Activated B cell treated with CpG ODN at 0.5 μM for 24 hours (primary cell): ENCODE measurements at regions of chr1 and their contacts with region 1.

Region 1: GRCh38 chr1:54052934-54053744 is at the starts of genes TCEANC2 and TMEM59:
- DNase-seq: peak; percentile 92
- ATAC-seq: peak; percentile 92
- H3K4me3 Mint-ChIP-seq: no peak within 1 kb of the TSS
- H3K27ac Mint-ChIP-seq: no peak within 1 kb of the TSS
- H3K4me1 Mint-ChIP-seq: peaks cover 38% of the 10 kb centered on the region
- H3K27me3 Mint-ChIP-seq: no peaks in the 10 kb centered on the region
- CTCF ChIP-seq: no peak
- total RNA-seq, gene TCEANC2: 7.3 and 8.1 TPM in 2 replicates
- total RNA-seq, gene TMEM59: 103 and 123 TPM in 2 replicates

Region 2: GRCh38 chr1:53837924-53838652 is 215.1 kb before region 1 on chr1 and contains the start of gene NDC1:
- CTCF ChIA-PET with region 1: no interaction called
- POLR2A ChIA-PET with region 1: no interaction called
- intact Hi-C with region 1: loop called (anchors 1 kb)
- DNase-seq: peak; percentile 86
- ATAC-seq: peak; percentile 89
- H3K4me3 Mint-ChIP-seq: peak within 1 kb of the TSS; percentile 94
- H3K27ac Mint-ChIP-seq: peak within 1 kb of the TSS; percentile 98
- H3K4me1 Mint-ChIP-seq: peaks cover 33% of the 10 kb centered on the region
- H3K27me3 Mint-ChIP-seq: no peaks in the 10 kb centered on the region
- CTCF ChIP-seq: no peak
- total RNA-seq, gene NDC1: 10.6 and 14.0 TPM in 2 replicates

Region 3: DNA sequence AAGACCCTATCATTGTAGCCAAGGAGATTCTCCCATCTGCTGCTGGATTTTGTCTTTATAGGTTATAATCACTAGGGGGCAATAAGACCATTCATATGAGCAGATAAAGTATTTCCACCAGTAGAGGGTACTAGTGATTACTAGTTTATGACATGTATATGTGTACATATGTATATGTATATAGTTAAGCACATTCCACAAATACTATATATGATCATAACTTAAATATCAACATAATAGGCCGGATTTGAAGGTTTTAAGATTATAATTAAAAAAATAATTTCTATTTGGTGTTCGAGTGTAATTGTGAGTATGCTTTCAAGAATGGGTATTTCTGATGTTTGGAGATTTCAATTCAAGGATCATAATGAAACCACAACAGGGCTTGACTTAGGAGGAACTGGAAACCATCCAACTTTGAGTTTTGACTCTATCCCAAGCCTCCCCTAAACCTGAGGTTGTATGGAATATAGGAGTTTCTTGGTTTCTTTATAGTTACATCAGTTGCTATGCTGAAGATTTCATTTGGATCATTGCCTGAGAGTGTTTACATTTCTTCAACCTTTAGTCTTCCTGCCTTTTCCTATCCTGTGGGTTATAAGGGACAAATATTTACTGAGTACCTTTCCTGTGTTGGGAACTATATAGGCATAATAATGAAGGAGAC is 17.2 kb after region 1 on chr1:
- CTCF ChIA-PET with region 1: no interaction called
- POLR2A ChIA-PET with region 1: interaction called, 9 read pairs
- intact Hi-C with region 1: loop called (anchors 1 kb)
- DNase-seq: no peak
- ATAC-seq: peak; percentile 95
- H3K4me3 Mint-ChIP-seq: no peak overlapping the region
- H3K27ac Mint-ChIP-seq: no peak overlapping the region
- H3K4me1 Mint-ChIP-seq: no peaks in the 10 kb centered on the region
- H3K27me3 Mint-ChIP-seq: no peaks in the 10 kb centered on the region
- CTCF ChIP-seq: peak; percentile 88

Region 4: DNA sequence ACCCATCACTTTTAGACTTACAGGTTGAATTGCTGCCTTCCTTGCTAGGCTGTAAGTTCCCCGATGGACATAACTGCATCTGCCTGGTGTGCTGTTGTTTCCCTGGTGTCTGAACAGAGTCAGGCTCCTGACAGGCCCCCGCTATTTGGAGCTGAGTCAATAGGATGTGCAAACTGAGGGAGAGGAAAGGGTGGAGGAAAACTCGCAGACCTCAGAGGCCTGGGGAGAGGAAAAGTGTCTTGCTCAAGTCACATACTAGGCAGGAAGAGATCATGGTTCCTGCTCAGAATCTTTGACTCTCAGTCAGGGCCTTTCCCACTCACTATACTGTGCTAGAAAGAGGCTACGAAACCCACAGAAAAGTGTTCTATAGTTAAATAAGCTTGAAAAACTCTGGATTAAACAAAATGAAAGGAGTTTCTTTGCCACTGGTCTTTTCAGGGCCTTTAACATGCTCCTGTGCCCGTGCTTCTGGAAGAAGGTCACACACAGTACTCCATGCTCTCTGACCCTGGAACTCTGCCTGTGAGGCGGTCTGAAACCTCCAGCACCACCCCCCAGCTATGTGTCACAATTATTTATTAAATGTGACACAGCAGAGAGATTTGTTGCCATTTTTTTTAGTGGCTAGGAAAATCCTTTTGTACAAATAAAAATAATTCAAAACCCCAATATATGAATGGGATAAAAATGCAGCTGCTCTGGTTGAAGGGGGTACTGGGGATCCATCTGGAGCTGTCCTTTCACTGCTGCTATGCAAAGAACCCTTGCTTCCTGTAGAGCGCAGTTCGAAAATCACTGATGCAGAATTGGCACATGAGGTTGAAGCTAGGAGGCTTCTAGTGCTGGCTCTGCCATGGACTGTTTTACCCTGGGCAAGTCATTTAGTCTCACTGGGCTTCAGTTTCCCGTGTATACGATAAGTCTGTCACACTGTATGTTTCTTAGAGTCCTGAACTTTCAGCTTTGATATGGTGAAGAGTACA is 119.8 kb after region 1 on chr1:
- CTCF ChIA-PET with region 1: no interaction called
- POLR2A ChIA-PET with region 1: no interaction called
- intact Hi-C with region 1: no loop called
- DNase-seq: no peak
- ATAC-seq: no peak
- H3K4me3 Mint-ChIP-seq: no peak overlapping the region
- H3K27ac Mint-ChIP-seq: no peak overlapping the region
- H3K4me1 Mint-ChIP-seq: no peaks in the 10 kb centered on the region
- H3K27me3 Mint-ChIP-seq: no peaks in the 10 kb centered on the region
- CTCF ChIP-seq: no peak

Region 5: GRCh38 chr1:54715493-54716298 is 662.6 kb after region 1 on chr1 and contains the start of gene TTC4:
- CTCF ChIA-PET with region 1: no interaction called
- POLR2A ChIA-PET with region 1: interaction called, 4 read pairs
- intact Hi-C with region 1: loop called (anchors 1 kb)
- DNase-seq: peak; percentile 88
- ATAC-seq: peak; percentile 98
- H3K4me3 Mint-ChIP-seq: peak within 1 kb of the TSS; percentile 94
- H3K27ac Mint-ChIP-seq: peak within 1 kb of the TSS; percentile 83
- H3K4me1 Mint-ChIP-seq: peaks cover 30% of the 10 kb centered on the region
- H3K27me3 Mint-ChIP-seq: no peaks in the 10 kb centered on the region
- CTCF ChIP-seq: no peak
- total RNA-seq, gene TTC4: 30.8 and 31.5 TPM in 2 replicates

Region 6: GRCh38 chr1:54800899-54801759 is 748.0 kb after region 1 on chr1 and contains the start of gene TTC22:
- CTCF ChIA-PET with region 1: no interaction called
- POLR2A ChIA-PET with region 1: no interaction called
- intact Hi-C with region 1: loop called (anchors 1 kb)
- DNase-seq: peak; percentile 67
- ATAC-seq: peak; percentile 90
- H3K4me3 Mint-ChIP-seq: peak within 1 kb of the TSS; percentile 90
- H3K27ac Mint-ChIP-seq: peak within 1 kb of the TSS; percentile 83
- H3K4me1 Mint-ChIP-seq: peaks cover 29% of the 10 kb centered on the region
- H3K27me3 Mint-ChIP-seq: no peaks in the 10 kb centered on the region
- CTCF ChIP-seq: no peak
- total RNA-seq, gene TTC22: 4.9 and 6.0 TPM in 2 replicates